CD8-positive, alpha-beta memory T cell (primary cell): ENCODE measurements at regions of chr5 and their contacts with region 1.

Region 1: GRCh38 chr5:142783601-142784341 is 13.6 kb downstream of the ARHGAP26 start:
- DNase-seq: peak in 4 of 5 donors; percentile 33 to 76 (median 49)
- H3K4me3 ChIP-seq: peak overlapping the region; percentile 42
- H3K4me3 Mint-ChIP-seq: peak overlapping the region; percentile 66 to 93 (median 87)
- H3K27ac ChIP-seq: peak overlapping the region; percentile 38
- H3K27ac Mint-ChIP-seq: peak overlapping the region; percentile 72 to 99 (median 93)
- H3K4me1 ChIP-seq: peaks cover 76% of the 10 kb centered on the region
- H3K4me1 Mint-ChIP-seq: peaks cover 89 to 93% (median 91%) of the 10 kb centered on the region in 3 donors
- H3K27me3 ChIP-seq: no peaks in the 10 kb centered on the region
- H3K27me3 Mint-ChIP-seq: no peaks in the 10 kb centered on the region

Region 2: GRCh38 chr5:142740474-142741242 is 43.1 kb before region 1 on chr5:
- CTCF ChIA-PET with region 1: no interaction called
- POLR2A ChIA-PET with region 1: no interaction called
- DNase-seq: no peak
- H3K4me3 ChIP-seq: no peak overlapping the region
- H3K4me3 Mint-ChIP-seq: no peak overlapping the region
- H3K27ac ChIP-seq: no peak overlapping the region
- H3K27ac Mint-ChIP-seq: no peak overlapping the region
- H3K4me1 ChIP-seq: no peaks in the 10 kb centered on the region
- H3K4me1 Mint-ChIP-seq: peaks cover 21 to 24% (median 22%) of the 10 kb centered on the region in 3 donors
- H3K27me3 ChIP-seq: no peaks in the 10 kb centered on the region
- H3K27me3 Mint-ChIP-seq: peaks cover 3 to 8% of the 10 kb centered on the region in 2 donors

Region 3: GRCh38 chr5:142758056-142758795 is 25.5 kb before region 1 on chr5:
- CTCF ChIA-PET with region 1: no interaction called
- POLR2A ChIA-PET with region 1: no interaction called
- DNase-seq: no peak
- H3K4me3 ChIP-seq: no peak overlapping the region
- H3K4me3 Mint-ChIP-seq: no peak overlapping the region
- H3K27ac ChIP-seq: no peak overlapping the region
- H3K27ac Mint-ChIP-seq: peak overlapping the region in 1 of 8 donors; percentile 64
- H3K4me1 ChIP-seq: no peaks in the 10 kb centered on the region
- H3K4me1 Mint-ChIP-seq: peaks cover 8 to 16% (median 11%) of the 10 kb centered on the region in 3 donors
- H3K27me3 ChIP-seq: no peaks in the 10 kb centered on the region
- H3K27me3 Mint-ChIP-seq: no peaks in the 10 kb centered on the region

Region 4: GRCh38 chr5:142800776-142801494 is 17.2 kb after region 1 on chr5:
- CTCF ChIA-PET with region 1: interaction called, 21 read pairs
- POLR2A ChIA-PET with region 1: interaction called, 40 read pairs
- DNase-seq: peak; percentile 23 to 71 (median 70)
- H3K4me3 ChIP-seq: peak overlapping the region; percentile 33
- H3K4me3 Mint-ChIP-seq: peak overlapping the region; percentile 64 to 89 (median 78)
- H3K27ac ChIP-seq: peak overlapping the region; percentile 32
- H3K27ac Mint-ChIP-seq: peak overlapping the region; percentile 85 to 98 (median 94)
- H3K4me1 ChIP-seq: peaks cover 60% of the 10 kb centered on the region
- H3K4me1 Mint-ChIP-seq: peaks cover 82 to 95% (median 86%) of the 10 kb centered on the region in 3 donors
- H3K27me3 ChIP-seq: no peaks in the 10 kb centered on the region
- H3K27me3 Mint-ChIP-seq: peaks cover 0 to 2% of the 10 kb centered on the region in 2 donors